ENCODE measurements at regions of chr15 and their contacts with region 1.

Region 1: GRCh38 chr15:78108299-78109084 is 16.1 kb downstream of the SH2D7 start:
- DNase-seq: peak; percentile 85 to 95 (median 93)
- ATAC-seq: peak; percentile 88 to 89
- H3K4me3 ChIP-seq: no peak overlapping the region
- H3K27ac ChIP-seq: no peak overlapping the region
- H3K4me1 ChIP-seq: no peaks in the 10 kb centered on the region
- H3K27me3 ChIP-seq: no peaks in the 10 kb centered on the region

Region 2: DNA sequence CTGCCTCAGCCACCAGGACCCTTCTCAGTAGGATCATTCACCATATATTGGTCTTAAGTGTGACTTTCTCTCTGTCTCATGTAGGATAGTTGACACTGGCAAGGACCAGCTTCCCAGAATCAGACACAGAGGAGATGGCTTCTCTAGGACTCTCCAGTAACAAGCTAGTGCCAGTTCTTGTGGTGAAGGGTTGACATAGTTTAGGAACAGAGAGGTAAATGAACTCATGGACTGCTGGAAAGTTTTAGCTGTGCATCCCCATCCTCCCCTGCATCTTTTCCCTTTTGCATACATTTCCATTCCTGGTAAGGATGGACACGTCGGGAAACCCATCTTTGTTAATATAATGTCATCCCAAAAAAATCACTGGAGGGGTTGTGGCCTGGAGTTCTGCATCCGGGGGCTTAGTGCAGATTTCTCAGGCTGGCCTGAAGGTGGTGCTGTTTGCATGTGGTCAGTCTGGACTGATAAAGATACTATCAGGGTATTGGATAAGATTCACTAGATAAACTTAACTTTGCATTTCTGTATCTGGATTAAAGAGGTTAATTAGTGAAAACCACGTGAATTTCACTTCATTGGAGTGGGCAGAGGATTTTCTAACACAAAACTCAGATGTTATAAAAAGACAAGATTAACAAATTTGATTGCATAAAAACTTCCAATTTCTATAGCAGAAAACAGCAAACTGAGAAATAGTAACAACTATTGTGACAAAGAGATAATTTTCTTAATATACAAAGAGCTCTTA is 141.8 kb before region 1 on chr15:
- intact Hi-C with region 1: loop called in 3 of 4 experiments (anchors 2 kb)
- DNase-seq: no peak
- ATAC-seq: peak; percentile 77 to 84
- H3K4me3 ChIP-seq: no peak overlapping the region
- H3K27ac ChIP-seq: no peak overlapping the region
- H3K4me1 ChIP-seq: no peaks in the 10 kb centered on the region
- H3K27me3 ChIP-seq: no peaks in the 10 kb centered on the region

Region 3: GRCh38 chr15:78018946-78019644 is 89.4 kb before region 1 on chr15:
- intact Hi-C with region 1: loop called in 1 of 4 experiments (anchors 10 kb)
- DNase-seq: no peak
- ATAC-seq: peak; percentile 34 to 42
- H3K4me3 ChIP-seq: no peak overlapping the region
- H3K27ac ChIP-seq: no peak overlapping the region
- H3K4me1 ChIP-seq: peaks cover 4% of the 10 kb centered on the region
- H3K27me3 ChIP-seq: no peaks in the 10 kb centered on the region

Region 4: GRCh38 chr15:78234515-78235040 is 126.1 kb after region 1 on chr15 and contains the start of gene ACSBG1:
- intact Hi-C with region 1: loop called in 1 of 4 experiments (anchors 5 kb)
- DNase-seq: no peak
- ATAC-seq: no peak
- H3K4me3 ChIP-seq: no peak within 1 kb of the TSS
- H3K27ac ChIP-seq: no peak within 1 kb of the TSS
- H3K4me1 ChIP-seq: no peaks in the 10 kb centered on the region
- H3K27me3 ChIP-seq: no peaks in the 10 kb centered on the region
- total RNA-seq, gene ACSBG1: 0.35 to 0.51 (median 0.42) TPM in 3 of 4 donors, not detected in the other

Region 5: GRCh38 chr15:78422571-78423340 is 314.3 kb after region 1 on chr15:
- intact Hi-C with region 1: loop called in 1 of 4 experiments (anchors 10 kb)
- DNase-seq: peak; percentile 58 to 80 (median 78)
- ATAC-seq: peak; percentile 62 to 74
- H3K4me3 ChIP-seq: no peak overlapping the region
- H3K27ac ChIP-seq: no peak overlapping the region
- H3K4me1 ChIP-seq: no peaks in the 10 kb centered on the region
- H3K27me3 ChIP-seq: no peaks in the 10 kb centered on the region